Activated T-helper 2 cell treated with anti-CD3 and anti-CD28 coated beads, Interferon-gamma antibody, Interleukin-2, Interleukin-4, amounts not matched to agents 10 μg/mL and 5 μg/mL and 100 μg/mL, durations not matched to agents 14 hours and 24 hours and 36 hours (primary cell): ENCODE measurements at regions of chr1 and their contacts with region 1.

Region 1: GRCh38 chr1:234881893-234882771 is 246.5 kb downstream of the TOMM20 start:
- DNase-seq: peak; percentile 25
- H3K4me3 Mint-ChIP-seq: no peak overlapping the region
- H3K27ac Mint-ChIP-seq: peak overlapping the region; percentile 75
- H3K4me1 Mint-ChIP-seq: peaks cover 56% of the 10 kb centered on the region
- H3K27me3 Mint-ChIP-seq: no peaks in the 10 kb centered on the region

Region 2: DNA sequence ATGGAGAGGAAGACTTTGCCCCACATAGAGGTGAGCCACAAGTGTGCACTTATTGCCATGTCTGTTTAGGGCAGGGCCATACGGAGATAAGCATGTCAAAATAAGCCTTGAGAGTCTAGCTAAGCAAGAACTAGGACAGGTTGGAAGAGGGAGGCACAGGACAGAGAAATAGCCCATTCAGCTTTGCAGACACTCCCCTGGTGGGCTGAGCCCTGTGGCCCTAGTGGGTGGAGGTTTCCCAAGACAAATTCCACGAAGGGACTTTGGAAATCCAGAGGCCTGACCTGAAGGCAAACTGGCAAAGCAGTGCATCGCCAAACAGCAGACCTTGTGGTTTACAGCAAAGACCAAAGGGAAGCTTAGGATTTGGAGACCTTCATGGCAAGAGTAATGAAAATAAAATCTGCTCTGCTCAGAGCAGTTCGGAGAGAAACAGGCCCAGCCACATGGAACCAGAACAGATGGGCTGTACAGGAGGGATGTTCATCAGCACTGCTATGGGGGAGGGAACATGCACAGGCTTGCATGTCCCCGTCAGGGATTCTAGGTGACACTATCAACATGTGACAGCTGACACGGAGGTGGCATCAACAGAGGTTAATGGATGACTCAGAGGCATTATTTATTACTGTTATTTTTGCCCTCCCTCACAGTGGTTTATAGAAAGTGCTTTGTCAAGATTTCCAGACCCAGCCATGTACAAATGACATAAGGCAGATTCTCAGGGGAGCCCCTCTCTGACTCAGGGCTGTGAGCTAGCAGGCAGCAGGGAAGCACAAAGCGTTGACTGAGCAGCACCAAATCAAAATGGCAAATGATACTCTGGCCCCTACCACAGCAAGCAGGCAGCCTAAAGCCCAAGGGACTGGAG is 182.1 kb before region 1 on chr1:
- intact Hi-C with region 1: no loop called
- DNase-seq: no peak
- H3K4me3 Mint-ChIP-seq: no peak overlapping the region
- H3K27ac Mint-ChIP-seq: no peak overlapping the region
- H3K4me1 Mint-ChIP-seq: peaks cover 4% of the 10 kb centered on the region
- H3K27me3 Mint-ChIP-seq: no peaks in the 10 kb centered on the region

Region 3: DNA sequence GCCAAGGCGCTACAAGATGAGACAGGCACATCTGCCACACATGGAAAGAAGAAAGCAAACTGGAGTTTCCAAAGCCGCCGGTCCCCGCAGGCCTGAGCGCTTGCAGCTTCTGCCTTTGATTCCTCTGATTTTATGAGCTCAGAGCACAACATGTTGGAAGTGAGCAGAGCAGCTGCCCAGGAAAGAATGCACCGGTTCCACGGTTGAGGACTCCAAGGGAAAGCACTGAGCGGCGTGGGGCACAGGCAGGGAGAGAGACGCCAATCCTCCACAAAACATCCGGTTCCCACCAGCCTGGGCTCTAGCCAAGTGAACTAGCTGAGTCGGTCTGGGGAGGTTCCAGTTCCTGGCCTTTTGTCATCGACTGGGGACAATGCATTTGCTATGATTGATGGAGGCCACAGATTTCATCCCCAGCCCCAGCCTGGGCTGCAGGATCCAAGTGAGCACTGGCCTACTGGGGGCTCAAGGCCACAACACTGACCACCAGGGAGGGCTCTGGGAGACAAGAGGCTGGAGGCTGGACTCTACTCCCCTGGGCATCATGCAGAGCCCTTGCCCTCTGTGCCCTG is 19.1 kb before region 1 on chr1:
- intact Hi-C with region 1: loop called (anchors 2 kb)
- DNase-seq: no peak
- H3K4me3 Mint-ChIP-seq: no peak overlapping the region
- H3K27ac Mint-ChIP-seq: no peak overlapping the region
- H3K4me1 Mint-ChIP-seq: peaks cover 30% of the 10 kb centered on the region
- H3K27me3 Mint-ChIP-seq: no peaks in the 10 kb centered on the region